Heart left ventricle (tissue), 16 donors: ENCODE measurements at regions of chr3 and their contacts with region 1.

Region 1: DNA sequence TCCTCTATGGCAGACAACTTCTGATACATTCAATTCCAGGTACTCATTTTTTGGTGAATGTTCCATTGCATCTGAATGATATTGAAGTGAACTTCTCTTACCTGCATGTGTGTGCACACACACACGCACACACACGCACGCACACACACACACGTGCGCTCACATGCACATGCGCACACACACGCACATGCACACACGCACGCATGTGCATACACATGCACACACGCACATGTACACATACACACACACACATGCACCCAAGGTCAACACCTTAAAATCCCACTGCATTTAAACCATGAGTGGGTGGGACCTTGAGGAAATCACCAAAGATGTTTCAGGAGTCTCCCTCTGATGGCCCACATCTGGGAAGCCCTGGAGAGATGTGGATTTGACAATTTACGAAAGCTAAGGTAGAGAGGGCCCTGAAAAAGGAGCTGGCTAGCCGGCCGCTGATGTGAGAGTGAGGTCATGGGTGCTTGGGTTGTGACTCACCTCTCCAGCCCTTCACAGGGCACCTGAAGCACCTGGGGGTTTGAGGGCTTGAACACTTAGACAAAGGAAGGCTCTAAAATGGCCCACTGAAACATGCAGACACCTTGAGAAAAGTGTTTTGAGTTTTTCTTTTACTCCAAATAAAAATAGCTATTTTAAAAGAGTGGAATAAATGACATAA is 269.1 kb upstream of the LRRFIP2 start:
- DNase-seq: no peak
- ATAC-seq: no peak
- H3K4me3 ChIP-seq: no peak overlapping the region
- H3K27ac ChIP-seq: no peak overlapping the region
- H3K4me1 ChIP-seq: peaks cover 0 to 10% (median 0%) of the 10 kb centered on the region in 12 donors
- H3K27me3 ChIP-seq: peaks cover 0 to 3% (median 0%) of the 10 kb centered on the region in 9 donors
- CTCF ChIP-seq: no peak
- POLR2A ChIP-seq: no peak

Region 2: DNA sequence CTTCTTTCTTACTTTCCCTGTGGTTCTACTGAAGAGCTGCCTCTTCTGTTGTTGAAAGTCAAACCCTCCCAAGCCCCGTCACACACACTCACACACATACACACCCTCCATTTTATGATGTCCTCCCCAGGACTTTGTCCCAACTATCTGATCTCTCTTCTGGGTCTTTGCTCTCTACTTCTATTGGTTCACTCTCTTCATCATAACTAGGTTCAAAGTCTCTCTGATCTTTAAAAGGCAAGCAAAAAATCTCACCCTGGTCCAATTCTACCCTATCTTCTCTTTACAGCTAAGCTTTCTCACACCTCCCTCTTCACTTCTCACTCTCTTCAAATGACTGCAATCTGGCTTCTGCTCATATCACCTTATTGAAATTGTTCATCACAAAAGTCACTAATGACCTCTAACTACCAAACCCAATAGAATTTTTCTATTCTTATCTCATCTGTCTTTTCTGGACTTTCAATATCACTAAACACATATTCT is 303.9 kb before region 1 on chr3:
- intact Hi-C with region 1: no loop called
- DNase-seq: no peak
- ATAC-seq: peak; percentile 23 to 87 (median 58)
- H3K4me3 ChIP-seq: no peak overlapping the region
- H3K27ac ChIP-seq: peak overlapping the region in 8 of 12 donors; percentile 0 to 65 (median 44)
- H3K4me1 ChIP-seq: peaks cover 0 to 48% (median 19%) of the 10 kb centered on the region in 12 donors
- H3K27me3 ChIP-seq: no peaks in the 10 kb centered on the region
- CTCF ChIP-seq: no peak
- POLR2A ChIP-seq: no peak

Region 3: GRCh38 chr3:37700466-37701248 is 257.2 kb after region 1 on chr3:
- intact Hi-C with region 1: loop called in 1 of 10 experiments (anchors 5 kb)
- DNase-seq: no peak
- ATAC-seq: peak in 3 of 4 donors; percentile 18 to 40 (median 25)
- H3K4me3 ChIP-seq: no peak overlapping the region
- H3K27ac ChIP-seq: no peak overlapping the region
- H3K4me1 ChIP-seq: peaks cover 0 to 34% (median 14%) of the 10 kb centered on the region in 12 donors
- H3K27me3 ChIP-seq: no peaks in the 10 kb centered on the region
- CTCF ChIP-seq: peak in 9 of 12 donors; percentile 10 to 49 (median 24)
- POLR2A ChIP-seq: no peak

Region 4: GRCh38 chr3:37833302-37834186 is 390.0 kb after region 1 on chr3:
- intact Hi-C with region 1: loop called in 1 of 10 experiments (anchors 10 kb)
- DNase-seq: peak in 3 of 5 donors; percentile 44 to 50 (median 47)
- ATAC-seq: peak; percentile 65 to 90 (median 90)
- H3K4me3 ChIP-seq: no peak overlapping the region
- H3K27ac ChIP-seq: no peak overlapping the region
- H3K4me1 ChIP-seq: peaks cover 0 to 9% (median 0%) of the 10 kb centered on the region in 12 donors
- H3K27me3 ChIP-seq: no peaks in the 10 kb centered on the region
- CTCF ChIP-seq: peak; percentile 22 to 59 (median 40)
- POLR2A ChIP-seq: no peak

Region 5: DNA sequence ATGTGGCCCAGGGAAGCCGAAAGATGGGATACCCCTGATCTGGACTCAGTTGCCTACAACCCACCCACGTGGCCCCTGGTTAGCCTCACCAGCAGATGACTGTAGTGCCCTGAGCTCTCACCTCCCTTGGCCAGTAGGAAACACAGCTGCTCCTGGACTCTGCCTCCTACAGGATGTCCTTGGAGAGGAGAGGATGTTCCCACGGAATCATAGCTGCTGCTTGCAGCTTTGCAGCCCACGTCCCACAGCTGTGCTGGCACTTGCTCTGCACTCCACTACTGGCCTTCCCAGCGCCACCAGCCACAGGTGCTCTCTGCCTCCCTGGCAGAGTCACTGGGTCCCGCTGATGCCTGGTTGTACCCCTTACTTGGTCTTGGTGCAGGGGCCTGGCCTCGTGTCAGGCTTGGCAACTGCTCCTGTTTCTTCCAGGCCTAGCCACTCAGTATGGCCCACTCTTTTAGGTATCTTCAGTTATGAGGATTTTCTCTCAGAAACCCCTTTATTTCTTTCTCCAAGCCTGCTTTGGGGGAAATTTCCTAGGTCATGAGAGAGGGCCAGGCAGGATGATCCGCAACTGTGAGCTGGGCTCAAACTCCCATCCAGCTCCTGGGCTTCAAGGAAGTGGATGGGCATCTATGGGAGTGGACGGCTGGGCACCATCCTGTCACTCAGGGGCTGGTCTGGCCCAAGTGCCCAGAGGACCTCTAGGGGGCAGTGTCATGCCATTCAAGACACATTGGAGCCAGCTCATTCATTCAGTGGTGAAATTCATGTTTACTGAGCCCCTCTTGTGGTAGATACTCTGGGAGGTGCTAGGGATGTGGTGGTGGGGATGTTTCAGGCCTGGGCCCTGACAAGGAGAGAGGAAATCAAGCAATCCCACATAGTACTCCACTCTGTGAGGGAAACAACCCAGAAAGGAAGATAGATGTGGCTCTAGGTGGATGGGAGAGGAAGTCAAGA is 530.9 kb after region 1 on chr3:
- intact Hi-C with region 1: loop called in 1 of 10 experiments (anchors 10 kb)
- DNase-seq: peak in 4 of 5 donors; percentile 59 to 73 (median 60)
- ATAC-seq: peak; percentile 45 to 90 (median 82)
- H3K4me3 ChIP-seq: no peak overlapping the region
- H3K27ac ChIP-seq: peak overlapping the region in 5 of 12 donors; percentile 29 to 62 (median 49)
- H3K4me1 ChIP-seq: peaks cover 0 to 23% (median 10%) of the 10 kb centered on the region in 12 donors
- H3K27me3 ChIP-seq: no peaks in the 10 kb centered on the region
- CTCF ChIP-seq: peak; percentile 69 to 85 (median 77)
- POLR2A ChIP-seq: no peak